PC-3 (cell line): ENCODE measurements at regions of chr10 and their contacts with region 1.

Region 1: DNA sequence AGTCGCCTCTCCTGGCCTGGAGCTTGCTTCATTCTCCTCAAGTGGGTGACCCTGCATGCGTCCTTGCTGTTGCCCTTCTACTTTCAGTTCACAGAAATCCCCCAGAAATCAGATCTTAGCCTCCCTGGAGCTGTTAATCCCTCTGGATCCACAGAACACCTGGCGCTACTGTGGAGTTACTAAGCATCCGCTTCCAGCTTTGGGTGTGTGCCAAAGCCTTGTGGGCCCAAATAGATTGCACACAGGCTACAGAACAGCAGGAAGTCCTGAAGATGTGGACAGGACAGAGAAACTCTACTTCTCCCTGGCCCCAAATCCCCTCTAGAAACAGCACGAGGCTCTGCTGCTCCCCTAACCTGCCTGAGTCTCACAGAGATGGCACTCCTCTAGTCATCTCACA is 36.6 kb upstream of the PDLIM1 start:
- DNase-seq: peak; percentile 36
- ATAC-seq: no peak
- H3K4me3 ChIP-seq: no peak overlapping the region
- H3K27ac ChIP-seq: no peak overlapping the region
- H3K4me1 ChIP-seq: peaks cover 29% of the 10 kb centered on the region
- H3K27me3 ChIP-seq: no peaks in the 10 kb centered on the region
- CTCF ChIP-seq: no peak

Region 2: DNA sequence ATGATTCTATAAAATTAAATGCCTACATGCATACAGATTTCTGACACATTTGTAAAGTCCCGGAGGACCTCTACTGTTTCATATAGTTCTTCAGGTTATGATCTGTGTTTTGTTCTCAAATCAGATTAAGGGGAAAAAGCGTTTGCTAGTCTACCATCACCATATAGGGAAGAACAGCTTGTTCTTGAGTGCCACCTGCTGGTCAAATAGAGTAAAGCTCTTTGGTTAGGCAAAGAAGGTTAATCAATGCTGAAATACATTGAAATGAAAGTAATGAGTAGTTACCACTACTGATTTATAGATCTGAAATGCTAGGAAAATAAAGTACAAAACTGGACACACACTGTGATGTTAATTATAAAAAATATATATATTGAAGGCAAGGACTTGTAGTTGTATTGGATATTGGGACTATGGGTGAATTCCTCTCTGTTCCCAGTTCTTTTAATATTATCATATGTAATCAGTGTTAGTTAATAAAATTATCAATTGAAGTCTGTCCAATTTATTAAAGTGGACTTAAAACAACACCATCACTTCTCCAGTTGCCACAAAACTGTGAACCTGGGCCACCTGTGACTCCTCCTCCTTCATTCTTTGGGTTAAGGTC is 36.0 kb after region 1 on chr10:
- CTCF ChIA-PET with region 1: no interaction called
- POLR2A ChIA-PET with region 1: no interaction called
- intact Hi-C with region 1: no loop called
- DNase-seq: peak; percentile 80
- ATAC-seq: peak; percentile 83
- H3K4me3 ChIP-seq: no peak overlapping the region
- H3K27ac ChIP-seq: no peak overlapping the region
- H3K4me1 ChIP-seq: no peaks in the 10 kb centered on the region
- H3K27me3 ChIP-seq: no peaks in the 10 kb centered on the region
- CTCF ChIP-seq: peak; percentile 84

Region 3: DNA sequence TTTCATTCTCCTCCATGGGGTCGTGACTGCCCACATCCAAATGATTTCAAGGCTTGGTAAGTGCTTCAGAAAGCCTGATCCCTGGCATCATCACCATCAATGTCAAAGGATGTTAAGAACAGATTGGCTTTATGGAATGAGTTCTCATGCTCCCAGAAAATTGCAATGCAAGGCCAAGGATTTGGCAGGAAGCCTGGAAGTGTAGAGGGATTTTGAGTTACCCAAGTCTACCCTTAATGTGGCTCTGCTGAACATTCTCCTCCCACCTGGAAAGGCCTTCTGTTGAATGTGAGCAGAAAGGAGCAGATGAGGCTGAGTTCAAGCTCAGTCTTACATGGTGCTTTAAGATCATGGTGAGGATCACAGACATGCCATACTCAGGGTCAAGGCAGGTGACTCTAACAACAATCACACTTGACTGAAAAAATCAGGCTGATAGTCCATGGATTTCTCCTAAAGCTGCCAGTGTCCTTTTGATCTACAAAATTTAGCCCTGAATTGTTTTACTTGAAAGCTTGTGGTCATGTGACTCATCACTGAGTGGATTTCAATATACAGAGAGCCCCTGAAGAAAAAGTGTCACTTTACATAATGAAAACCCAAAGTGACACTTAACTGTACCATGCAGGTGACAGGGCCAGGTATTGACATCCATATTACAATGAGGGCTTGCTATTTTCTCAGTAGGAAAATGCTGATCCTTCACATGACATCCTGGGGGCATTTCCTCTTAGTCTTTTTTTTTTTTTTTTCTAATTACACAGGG is 74.5 kb after region 1 on chr10:
- CTCF ChIA-PET with region 1: no interaction called
- POLR2A ChIA-PET with region 1: interaction called, 39 read pairs
- intact Hi-C with region 1: no loop called
- DNase-seq: peak; percentile 35
- ATAC-seq: peak; percentile 18
- H3K4me3 ChIP-seq: no peak overlapping the region
- H3K27ac ChIP-seq: no peak overlapping the region
- H3K4me1 ChIP-seq: peaks cover 17% of the 10 kb centered on the region
- H3K27me3 ChIP-seq: no peaks in the 10 kb centered on the region
- CTCF ChIP-seq: no peak